ENCODE measurements at regions of chr11 and their contacts with region 1.

Region 1: DNA sequence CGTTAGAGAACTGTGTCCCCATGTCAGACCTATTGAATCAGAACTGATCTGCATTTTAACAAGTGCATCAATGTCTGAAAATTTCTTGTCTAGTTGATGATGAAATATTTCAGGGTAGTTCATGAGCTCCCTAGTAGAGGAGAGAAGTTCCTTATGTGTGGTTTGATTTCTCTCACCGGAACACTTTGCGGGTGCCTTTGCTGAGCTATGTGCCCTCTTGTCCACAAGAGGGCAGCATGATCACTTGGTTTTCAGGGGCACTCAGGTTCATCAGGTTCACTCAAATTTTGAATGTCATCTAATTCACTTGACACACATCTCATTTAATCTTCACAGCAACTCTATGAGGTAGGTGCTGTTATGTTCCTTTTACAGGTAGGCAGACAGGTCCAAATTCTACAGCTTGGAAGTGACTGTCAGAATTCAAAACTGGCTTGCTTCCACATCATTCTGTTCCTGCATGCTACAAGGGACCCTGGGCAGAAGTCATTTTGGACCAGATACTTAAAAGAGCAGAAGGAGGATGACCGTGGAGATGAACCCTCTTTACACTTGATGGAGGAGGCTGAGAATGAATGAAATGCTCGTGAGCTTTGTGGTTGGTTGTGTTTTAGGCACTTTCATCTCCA is 55.6 kb downstream of the P4HA3 start:
- DNase-seq: no peak
- H3K4me3 ChIP-seq: no peak overlapping the region
- CTCF ChIP-seq: peak; percentile 79

Region 2: DNA sequence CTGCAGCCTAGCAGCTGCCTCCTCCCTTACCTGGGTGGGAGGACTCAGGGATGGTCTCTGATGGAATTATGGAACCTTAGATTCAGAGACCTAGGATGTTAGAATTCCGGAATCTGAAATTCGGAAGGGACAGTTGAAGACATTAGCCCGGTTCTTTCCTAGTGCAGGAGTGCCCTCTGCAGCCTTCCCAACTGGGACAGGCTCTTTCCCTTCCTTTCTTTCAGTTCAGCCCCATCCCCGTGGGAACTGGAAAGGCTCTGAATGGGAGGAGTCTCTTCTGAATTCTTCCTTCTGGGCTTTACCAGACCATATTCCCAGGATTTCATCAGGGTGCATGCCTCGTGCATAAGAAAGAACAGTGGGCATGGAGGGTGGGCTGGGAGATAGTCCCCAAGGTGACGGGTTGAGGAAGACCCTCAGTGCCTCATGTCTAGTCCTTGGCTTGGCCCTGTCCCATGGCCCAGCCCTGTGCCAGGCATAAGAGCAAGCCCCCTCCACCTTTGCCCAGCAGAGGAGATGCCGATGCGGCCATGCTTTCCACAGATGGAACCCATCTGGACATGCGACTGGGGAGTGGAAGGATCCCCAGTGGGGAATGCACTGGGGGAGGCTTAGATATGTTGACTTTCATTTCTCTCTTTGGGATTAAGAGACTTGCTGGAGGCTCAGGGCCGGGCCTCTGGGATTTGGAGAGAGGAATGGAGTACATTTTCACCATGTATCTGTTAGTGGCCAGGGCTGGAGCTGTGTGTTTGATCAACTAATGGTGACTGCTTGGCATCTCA is 290.6 kb before region 1 on chr11:
- CTCF ChIA-PET with region 1: interaction called, 11 read pairs
- POLR2A ChIA-PET with region 1: no interaction called
- DNase-seq: no peak
- H3K4me3 ChIP-seq: peak overlapping the region; percentile 13
- CTCF ChIP-seq: no peak

Region 3: DNA sequence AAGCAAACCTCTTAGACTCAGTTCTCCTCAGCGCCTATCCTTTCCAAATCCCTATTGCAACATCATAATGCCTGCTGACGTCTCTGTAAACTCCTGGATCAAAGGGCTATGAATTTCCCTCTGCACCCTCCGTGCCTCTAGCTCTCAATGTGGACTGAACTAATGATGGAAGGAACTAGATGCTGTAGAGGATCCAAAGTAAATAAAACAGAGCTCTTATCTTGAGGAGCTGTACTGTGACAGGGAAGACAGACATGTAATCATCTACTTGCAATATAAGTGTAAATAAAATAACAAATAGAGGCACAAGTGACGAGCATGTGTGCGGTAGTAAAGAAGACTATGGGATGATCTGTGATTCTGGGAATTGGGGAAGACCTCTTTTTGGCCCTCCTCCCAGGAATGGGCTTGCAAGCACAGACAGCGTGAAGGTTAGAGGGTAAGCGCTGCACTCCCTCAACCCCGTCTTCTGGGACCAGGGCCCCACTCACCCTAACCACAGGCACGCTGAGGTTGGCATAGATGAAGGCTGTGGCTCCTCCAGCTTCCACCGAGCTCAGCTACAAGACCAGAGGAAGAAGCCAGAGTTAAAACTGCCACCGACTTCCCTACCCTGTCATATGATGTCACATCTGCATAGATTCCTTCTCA is 13.4 kb after region 1 on chr11:
- CTCF ChIA-PET with region 1: interaction called, 31 read pairs
- POLR2A ChIA-PET with region 1: no interaction called
- DNase-seq: no peak
- H3K4me3 ChIP-seq: no peak overlapping the region
- CTCF ChIP-seq: no peak

Region 4: GRCh38 chr11:74321487-74322188 is 65.8 kb after region 1 on chr11:
- CTCF ChIA-PET with region 1: interaction called, 110 read pairs
- POLR2A ChIA-PET with region 1: no interaction called
- DNase-seq: no peak
- H3K4me3 ChIP-seq: no peak overlapping the region
- CTCF ChIP-seq: peak; percentile 43

Region 5: GRCh38 chr11:74418509-74418895 is 162.6 kb after region 1 on chr11:
- CTCF ChIA-PET with region 1: interaction called, 11 read pairs
- POLR2A ChIA-PET with region 1: no interaction called
- DNase-seq: no peak
- H3K4me3 ChIP-seq: no peak overlapping the region
- CTCF ChIP-seq: no peak

Measured in AG04449 (cell line).